A549 (cell line): ENCODE measurements at regions of chr14 and their contacts with region 1.

Region 1: GRCh38 chr14:39102969-39103957 is at the start of gene SEC23A:
- DNase-seq: peak; percentile 75 to 92
- ATAC-seq: peak; percentile 97 to 98
- H3K4me3 ChIP-seq: peak within 1 kb of the TSS; percentile 90
- H3K27ac ChIP-seq: peak within 1 kb of the TSS; percentile 97
- H3K4me1 ChIP-seq: peaks cover 18% of the 10 kb centered on the region
- CTCF ChIP-seq: no peak
- EP300 ChIP-seq: no peak
- POLR2A ChIP-seq: peak; percentile 83
- RAD21 ChIP-seq: no peak
- polyA plus RNA-seq, gene SEC23A: 176 and 238 TPM in 2 replicates

Region 2: DNA sequence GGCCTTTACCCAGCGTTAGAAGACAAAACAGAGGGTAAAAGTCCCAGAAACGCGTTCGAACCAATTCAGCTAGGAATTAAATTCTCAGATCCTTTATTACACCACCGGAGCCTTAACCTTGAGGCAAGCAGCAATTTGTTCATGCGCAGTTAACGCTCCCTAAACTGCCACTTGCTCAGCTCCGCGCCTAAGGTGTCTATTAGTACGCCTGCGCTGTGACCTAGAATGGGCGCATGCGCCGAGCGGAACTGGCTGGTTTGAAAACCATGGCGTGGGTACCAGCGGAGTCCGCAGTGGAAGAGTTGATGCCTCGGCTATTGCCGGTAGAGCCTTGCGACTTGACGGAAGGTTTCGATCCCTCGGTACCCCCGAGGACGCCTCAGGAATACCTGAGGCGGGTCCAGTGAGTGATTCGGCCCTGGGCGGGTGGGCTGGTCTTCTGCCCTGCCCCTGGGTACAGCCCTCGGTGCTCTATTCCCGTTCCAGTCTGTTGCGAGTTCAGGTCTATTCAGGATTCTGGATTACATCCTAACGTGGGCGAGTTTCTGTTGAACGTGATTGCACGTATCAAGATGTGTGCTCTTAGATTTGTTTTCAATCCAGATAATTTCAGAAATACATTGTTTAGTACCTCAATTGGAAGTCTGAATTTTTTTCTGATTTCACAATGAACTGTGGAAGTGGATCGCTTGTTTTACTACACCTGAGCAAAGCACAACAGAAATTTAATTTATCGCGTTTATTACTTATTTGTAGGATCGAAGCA is 11.0 kb after region 1 on chr14 and contains the start of gene GEMIN2:
- CTCF ChIA-PET with region 1: interaction called, 8 read pairs
- POLR2A ChIA-PET with region 1: interaction called, 32 read pairs
- DNase-seq: peak; percentile 96 to 97
- ATAC-seq: peak; percentile 98
- H3K4me3 ChIP-seq: peak within 1 kb of the TSS; percentile 69
- H3K27ac ChIP-seq: peak within 1 kb of the TSS; percentile 83 to 85
- H3K4me1 ChIP-seq: peaks cover 13% of the 10 kb centered on the region; the same call in 2 of the 3 replicates
- CTCF ChIP-seq: no peak
- EP300 ChIP-seq: no peak
- POLR2A ChIP-seq: peak; percentile 94
- RAD21 ChIP-seq: no peak
- polyA plus RNA-seq, gene GEMIN2: 48.1 and 67.8 TPM in 2 replicates

Region 3: DNA sequence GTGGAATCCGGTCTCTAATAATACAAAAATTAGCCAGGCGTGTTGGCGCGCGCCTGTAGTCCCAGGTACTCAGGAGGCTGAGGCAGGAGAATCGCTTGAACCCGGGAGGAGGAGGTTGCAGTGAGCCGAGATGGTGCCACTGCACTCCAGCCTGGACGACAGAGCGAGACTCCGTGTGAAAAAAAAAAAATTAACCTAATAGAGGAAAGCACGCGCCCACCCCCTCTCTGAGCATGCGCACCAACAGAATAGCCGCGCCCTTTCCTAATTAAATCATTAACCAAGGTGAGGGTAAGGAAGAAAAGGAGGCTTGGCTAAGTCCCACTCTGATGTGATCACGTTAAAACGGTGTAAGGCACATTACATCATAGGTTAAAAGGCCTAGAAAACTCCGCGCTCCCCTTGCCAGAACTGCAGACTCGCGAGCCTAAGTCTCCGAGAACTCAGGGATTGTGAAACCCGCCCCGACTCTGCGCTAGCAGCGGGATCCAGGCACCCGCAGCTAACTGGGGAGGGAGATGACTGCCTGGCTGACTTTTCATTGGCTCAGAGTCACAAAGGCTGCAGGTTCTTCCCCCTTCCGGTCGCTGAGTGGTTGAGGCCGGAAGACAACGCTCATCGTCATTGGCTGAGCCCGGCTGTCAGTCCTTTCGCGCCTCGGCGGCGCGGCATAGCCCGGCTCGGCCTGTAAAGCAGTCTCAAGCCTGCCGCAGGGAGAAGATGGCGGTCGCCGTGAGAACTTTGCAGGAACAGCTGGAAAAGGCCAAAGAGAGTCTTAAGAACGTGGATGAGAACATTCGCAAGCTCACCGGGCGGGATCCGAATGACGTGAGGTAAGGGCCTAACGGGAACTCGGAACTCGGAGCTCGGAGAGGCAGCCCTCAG is 71.5 kb after region 1 on chr14 and contains the start of gene PNN:
- CTCF ChIA-PET with region 1: interaction called, 3 read pairs
- POLR2A ChIA-PET with region 1: interaction called, 34 read pairs
- DNase-seq: peak; percentile 96 to 100
- ATAC-seq: peak; percentile 95
- H3K4me3 ChIP-seq: peak within 1 kb of the TSS; percentile 82
- H3K27ac ChIP-seq: peak within 1 kb of the TSS; percentile 95
- H3K4me1 ChIP-seq: peaks cover 36% of the 10 kb centered on the region
- CTCF ChIP-seq: no peak
- EP300 ChIP-seq: no peak
- POLR2A ChIP-seq: peak; percentile 65
- RAD21 ChIP-seq: no peak
- polyA plus RNA-seq, gene PNN: 40.3 and 50.1 TPM in 2 replicates

Region 4: GRCh38 chr14:39266871-39267591 is 163.8 kb after region 1 on chr14:
- CTCF ChIA-PET with region 1: interaction called, 3 read pairs
- POLR2A ChIA-PET with region 1: interaction called, 11 read pairs
- DNase-seq: peak; percentile 58 to 90
- ATAC-seq: peak; percentile 91 to 94
- H3K4me3 ChIP-seq: peak overlapping the region; percentile 72
- H3K27ac ChIP-seq: peak overlapping the region; percentile 97 to 98
- H3K4me1 ChIP-seq: peaks cover 29% of the 10 kb centered on the region
- CTCF ChIP-seq: no peak
- EP300 ChIP-seq: no peak
- POLR2A ChIP-seq: peak; percentile 44
- RAD21 ChIP-seq: peak in 1 of 2 experiments; percentile 24; a peak in 1 of 5 replicates

Region 5: GRCh38 chr14:39368261-39368959 is 265.1 kb after region 1 on chr14:
- CTCF ChIA-PET with region 1: interaction called, 10 read pairs
- POLR2A ChIA-PET with region 1: interaction called, 3 read pairs
- DNase-seq: peak; percentile 47 to 77
- ATAC-seq: peak; percentile 80 to 87
- H3K4me3 ChIP-seq: no peak overlapping the region
- H3K27ac ChIP-seq: no peak overlapping the region
- H3K4me1 ChIP-seq: no peaks in the 10 kb centered on the region
- CTCF ChIP-seq: peak; percentile 81
- EP300 ChIP-seq: no peak
- POLR2A ChIP-seq: no peak
- RAD21 ChIP-seq: peak; percentile 84 to 88

Region 6: GRCh38 chr14:39426605-39427004 is 323.3 kb after region 1 on chr14:
- CTCF ChIA-PET with region 1: interaction called, 13 read pairs
- POLR2A ChIA-PET with region 1: interaction called, 21 read pairs
- DNase-seq: peak in 1 of 2 experiments; percentile 51
- ATAC-seq: peak; percentile 40 to 48; a peak in 3 of 6 replicates
- H3K4me3 ChIP-seq: no peak overlapping the region
- H3K27ac ChIP-seq: no peak overlapping the region
- H3K4me1 ChIP-seq: peaks cover 20% of the 10 kb centered on the region; the same call in 2 of the 3 replicates
- CTCF ChIP-seq: peak; percentile 54
- EP300 ChIP-seq: no peak
- POLR2A ChIP-seq: no peak
- RAD21 ChIP-seq: peak; percentile 65 to 67

Region 7: GRCh38 chr14:39432179-39432618 is 328.9 kb after region 1 on chr14 and contains the start of gene FBXO33:
- CTCF ChIA-PET with region 1: interaction called, 13 read pairs
- POLR2A ChIA-PET with region 1: interaction called, 21 read pairs
- DNase-seq: peak; percentile 89 to 97
- ATAC-seq: peak; percentile 89 to 93
- H3K4me3 ChIP-seq: peak within 1 kb of the TSS; percentile 96
- H3K27ac ChIP-seq: peak within 1 kb of the TSS; percentile 93 to 98
- H3K4me1 ChIP-seq: peaks cover 17% of the 10 kb centered on the region; the same call in 2 of the 3 replicates
- CTCF ChIP-seq: no peak
- EP300 ChIP-seq: no peak
- POLR2A ChIP-seq: no peak
- RAD21 ChIP-seq: no peak
- polyA plus RNA-seq, gene FBXO33: 10.6 and 10.8 TPM in 2 replicates